Activated CD4-positive, alpha-beta memory T cell treated with anti-CD3 and anti-CD28 coated beads for 36 hours (primary cell): ENCODE measurements at regions of chr20 and their contacts with region 1.

Region 1: DNA sequence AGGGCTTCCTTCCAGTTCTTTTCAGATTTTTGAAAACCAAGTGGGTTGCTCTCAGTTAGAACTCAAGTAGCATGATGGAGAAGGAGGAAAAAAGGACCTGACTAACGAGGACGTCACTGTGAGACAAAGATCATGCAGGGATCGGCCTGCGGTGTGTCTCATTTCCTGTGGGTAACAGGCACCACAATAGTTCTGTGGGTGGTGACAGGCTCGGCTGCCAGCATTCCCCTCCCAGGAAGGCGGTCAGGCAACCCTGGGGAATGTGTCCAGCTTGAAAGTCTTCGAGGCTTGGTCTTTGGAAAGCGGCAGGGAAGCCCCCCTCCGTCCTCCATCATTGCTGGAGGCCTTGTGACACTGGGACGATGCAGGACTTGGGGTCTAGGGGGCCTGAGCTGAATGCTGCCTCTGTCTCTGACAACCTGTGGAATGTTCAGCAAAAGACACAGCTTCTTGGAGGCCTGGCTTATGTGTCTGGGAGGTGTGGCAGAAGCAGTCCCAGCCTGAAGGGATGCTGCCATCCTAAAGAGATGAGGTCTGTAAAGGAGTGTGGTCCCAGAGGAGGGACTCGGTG is 121.0 kb downstream of the BCAS1 start:
- DNase-seq: peak; percentile 90
- H3K4me3 Mint-ChIP-seq: peak overlapping the region; percentile 66
- H3K27ac Mint-ChIP-seq: peak overlapping the region; percentile 87
- H3K4me1 Mint-ChIP-seq: peaks cover 29% of the 10 kb centered on the region
- H3K27me3 Mint-ChIP-seq: no peaks in the 10 kb centered on the region

Region 2: DNA sequence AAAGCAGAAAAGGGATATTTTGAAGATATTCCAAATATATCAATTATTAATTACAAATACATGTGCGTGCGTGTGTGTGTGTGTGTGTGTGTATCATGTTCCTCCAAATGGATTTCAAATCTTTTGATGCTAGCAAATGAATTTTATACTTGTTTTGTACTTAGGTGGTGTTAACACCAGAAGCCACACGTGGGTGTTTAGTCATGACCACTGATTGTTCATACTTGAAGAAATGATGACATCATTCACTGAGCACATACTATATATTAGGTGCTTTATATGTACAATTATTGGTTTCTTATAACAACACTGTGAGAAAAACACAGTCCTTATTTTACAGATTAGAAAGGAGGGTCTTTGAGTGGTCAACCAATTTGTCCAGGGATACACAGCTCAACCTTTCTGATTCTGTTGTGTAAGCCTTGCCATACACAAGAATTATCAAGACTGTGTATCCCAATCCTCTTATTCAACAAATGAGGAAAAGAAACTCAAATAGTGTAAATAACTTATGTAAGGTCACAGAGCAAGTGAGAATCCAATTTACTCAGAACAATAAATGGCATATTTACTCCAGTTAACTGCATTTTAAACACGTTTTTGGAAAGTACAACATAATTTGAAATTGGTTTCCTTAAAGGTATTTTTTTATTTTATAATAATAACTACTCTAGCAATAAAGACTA is 32.5 kb after region 1 on chr20:
- CTCF ChIA-PET with region 1: no interaction called
- POLR2A ChIA-PET with region 1: no interaction called
- intact Hi-C with region 1: loop called (anchors 1 kb)
- DNase-seq: peak; percentile 48
- H3K4me3 Mint-ChIP-seq: no peak overlapping the region
- H3K27ac Mint-ChIP-seq: no peak overlapping the region
- H3K4me1 Mint-ChIP-seq: peaks cover 4% of the 10 kb centered on the region
- H3K27me3 Mint-ChIP-seq: peaks cover 10% of the 10 kb centered on the region

Region 3: GRCh38 chr20:54062812-54063280 is 113.4 kb after region 1 on chr20:
- CTCF ChIA-PET with region 1: interaction called, 7 read pairs
- POLR2A ChIA-PET with region 1: no interaction called
- intact Hi-C with region 1: loop called (anchors 2 kb)
- DNase-seq: no peak
- H3K4me3 Mint-ChIP-seq: no peak overlapping the region
- H3K27ac Mint-ChIP-seq: no peak overlapping the region
- H3K4me1 Mint-ChIP-seq: peaks cover 13% of the 10 kb centered on the region
- H3K27me3 Mint-ChIP-seq: peaks cover 3% of the 10 kb centered on the region

Region 4: GRCh38 chr20:54207743-54208547 is 258.5 kb after region 1 on chr20 and contains the start of gene PFDN4:
- CTCF ChIA-PET with region 1: no interaction called
- POLR2A ChIA-PET with region 1: no interaction called
- intact Hi-C with region 1: loop called (anchors 1 kb)
- DNase-seq: peak; percentile 88
- H3K4me3 Mint-ChIP-seq: peak within 1 kb of the TSS; percentile 95
- H3K27ac Mint-ChIP-seq: peak within 1 kb of the TSS; percentile 99
- H3K4me1 Mint-ChIP-seq: peaks cover 50% of the 10 kb centered on the region
- H3K27me3 Mint-ChIP-seq: peaks cover 2% of the 10 kb centered on the region
- total RNA-seq, gene PFDN4: 38.4 to 40.3 TPM